ENCODE measurements at regions of chr19 and their contacts with region 1.

Region 1: DNA sequence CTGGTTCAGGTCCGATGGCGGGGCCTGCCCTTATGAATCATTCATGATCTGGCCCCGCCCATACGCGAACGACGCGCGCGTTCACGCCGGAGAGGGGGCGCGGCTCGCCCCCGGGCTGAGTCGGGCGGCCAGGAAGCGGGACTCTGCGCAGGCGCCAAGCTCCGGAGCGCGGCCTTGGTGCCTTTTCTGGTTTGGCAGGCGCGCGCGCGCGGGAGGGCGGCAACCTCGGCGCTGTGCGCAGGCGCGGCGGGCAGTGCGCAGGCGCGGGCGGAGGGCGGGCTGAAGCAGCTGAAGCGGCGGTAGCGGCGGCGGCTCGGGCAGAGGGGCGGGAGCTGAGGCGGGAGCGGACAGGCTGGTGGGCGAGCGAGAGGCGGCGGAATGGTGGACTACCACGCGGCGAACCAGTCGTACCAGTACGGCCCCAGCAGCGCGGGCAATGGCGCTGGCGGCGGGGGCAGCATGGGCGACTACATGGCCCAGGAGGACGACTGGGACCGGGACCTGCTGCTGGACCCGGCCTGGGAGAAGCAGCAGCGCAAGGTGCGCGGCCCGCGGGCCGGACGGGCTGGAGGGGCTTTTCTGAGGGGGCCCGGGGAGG is at the start of gene ACTN4:
- DNase-seq: peak; percentile 98 to 99
- H3K4me3 ChIP-seq: peak within 1 kb of the TSS; percentile 95 to 100 (median 95)
- H3K27ac ChIP-seq: peak within 1 kb of the TSS; percentile 98 to 99
- H3K4me1 ChIP-seq: peaks cover 2 to 24% of the 10 kb centered on the region in 2 donors
- H3K27me3 ChIP-seq: no peaks in the 10 kb centered on the region
- CTCF ChIP-seq: no peak
- POLR2A ChIP-seq: peak; percentile 96
- total RNA-seq, gene ACTN4: 182 to 296 (median 269) TPM

Region 2: GRCh38 chr19:38583219-38583984 is 64.1 kb before region 1 on chr19:
- intact Hi-C with region 1: no loop called
- DNase-seq: no peak
- H3K4me3 ChIP-seq: no peak overlapping the region
- H3K27ac ChIP-seq: no peak overlapping the region
- H3K4me1 ChIP-seq: no peaks in the 10 kb centered on the region
- H3K27me3 ChIP-seq: no peaks in the 10 kb centered on the region
- CTCF ChIP-seq: no peak
- POLR2A ChIP-seq: no peak

Region 3: GRCh38 chr19:38676023-38676877 is 28.8 kb after region 1 on chr19:
- intact Hi-C with region 1: no loop called
- DNase-seq: no peak
- H3K4me3 ChIP-seq: peak overlapping the region in 1 of 3 donors; percentile 5
- H3K27ac ChIP-seq: peak overlapping the region; percentile 94 to 99
- H3K4me1 ChIP-seq: peaks cover 5 to 26% of the 10 kb centered on the region in 2 donors
- H3K27me3 ChIP-seq: no peaks in the 10 kb centered on the region
- CTCF ChIP-seq: no peak
- POLR2A ChIP-seq: no peak

Region 4: DNA sequence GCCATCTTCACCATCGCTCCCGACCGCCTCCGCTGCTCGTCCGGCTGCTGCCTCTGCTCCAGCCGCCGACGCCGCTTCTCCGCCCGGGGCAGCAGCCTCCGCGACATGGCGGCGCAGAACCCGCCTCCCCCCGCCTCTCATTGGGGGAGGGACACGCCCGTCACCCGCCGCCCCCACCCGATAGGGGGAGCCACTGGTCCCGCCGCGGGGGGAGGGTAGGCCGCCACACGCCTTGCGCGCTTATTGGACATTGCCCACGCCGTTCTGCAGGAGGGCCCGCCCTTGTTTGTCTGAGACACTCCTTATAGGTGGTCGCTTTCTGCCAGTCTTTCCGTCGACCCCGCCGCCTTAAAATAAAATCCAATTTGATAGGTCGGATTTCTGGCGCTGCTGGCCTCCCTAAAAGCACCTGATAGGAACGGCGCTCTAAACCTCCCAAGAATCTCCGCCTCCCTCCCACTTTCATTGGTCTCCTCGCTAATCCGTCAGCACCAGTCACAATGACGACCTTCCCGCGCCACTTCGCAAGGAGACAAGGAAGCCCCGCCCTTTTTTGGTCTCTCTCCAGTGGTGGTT is 202.5 kb after region 1 on chr19 and contains the start of gene HNRNPL:
- intact Hi-C with region 1: loop called (anchors 5 kb)
- DNase-seq: peak; percentile 100
- H3K4me3 ChIP-seq: peak within 1 kb of the TSS; percentile 85 to 98 (median 96)
- H3K27ac ChIP-seq: peak within 1 kb of the TSS; percentile 100
- H3K4me1 ChIP-seq: peaks cover 0 to 16% of the 10 kb centered on the region in 2 donors
- H3K27me3 ChIP-seq: no peaks in the 10 kb centered on the region
- CTCF ChIP-seq: peak; percentile 43 to 58 (median 48)
- POLR2A ChIP-seq: peak; percentile 89
- total RNA-seq, gene HNRNPL: 164 to 193 (median 168) TPM